ENCODE measurements at regions of chr10 and their contacts with region 1.

Region 1: DNA sequence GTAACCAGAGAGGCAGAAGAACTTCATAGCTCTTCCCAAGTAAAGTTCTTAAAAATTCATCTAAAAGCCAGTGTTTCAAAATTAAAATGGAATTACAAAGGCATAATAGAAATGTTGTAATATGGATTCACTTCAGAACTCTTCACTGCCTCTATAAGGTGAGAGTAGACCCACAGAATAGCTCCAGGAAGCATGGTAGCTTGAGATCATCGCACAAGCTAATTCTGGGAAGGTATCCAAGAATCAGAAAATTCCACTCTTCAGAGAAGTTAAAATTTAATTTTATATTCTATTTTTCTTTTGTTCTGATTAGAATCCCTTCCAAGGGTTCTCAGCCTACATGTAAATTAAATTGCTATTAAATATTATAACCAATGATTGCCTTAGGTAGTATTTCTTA is 1.5 kb upstream of the DHX32 start:
- DNase-seq: no peak
- CTCF ChIP-seq: no peak

Region 2: GRCh38 chr10:125828311-125828710 is 54.3 kb before region 1 on chr10:
- CTCF ChIA-PET with region 1: no interaction called
- POLR2A ChIA-PET with region 1: no interaction called
- DNase-seq: no peak
- CTCF ChIP-seq: no peak

Region 3: DNA sequence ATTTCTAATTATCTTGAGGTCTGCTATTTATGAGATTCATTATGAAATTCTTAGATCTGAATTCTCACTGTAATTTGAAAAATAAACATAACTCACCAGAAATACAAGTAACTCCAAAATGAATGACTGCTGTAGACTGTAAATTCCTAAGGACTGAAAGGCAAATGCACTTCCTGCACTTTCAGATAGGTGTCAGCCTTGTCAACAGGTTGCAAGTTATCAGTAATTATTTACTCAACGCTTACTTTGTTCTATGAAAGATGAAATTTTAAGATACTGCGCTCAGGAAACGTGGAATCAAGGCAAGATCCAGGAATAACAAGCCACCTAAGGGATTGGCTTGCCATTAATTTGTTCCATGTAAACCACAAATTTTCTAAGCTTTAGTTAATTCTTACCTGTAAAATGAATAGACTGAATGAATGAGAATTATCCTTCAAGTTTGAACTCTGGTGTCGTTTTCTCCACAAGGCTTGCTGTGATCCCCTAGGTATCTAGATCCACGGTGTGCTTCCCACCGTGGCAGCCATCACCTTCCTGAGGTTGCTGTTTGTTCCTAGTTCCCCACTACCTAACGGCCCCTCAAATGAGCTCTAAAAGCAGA is 14.1 kb before region 1 on chr10:
- CTCF ChIA-PET with region 1: interaction called, 17 read pairs
- POLR2A ChIA-PET with region 1: no interaction called
- DNase-seq: peak; percentile 32
- CTCF ChIP-seq: peak; percentile 83